Activated CD4-positive, alpha-beta T cell treated with anti-CD3 and anti-CD28 coated beads for 36 hours (primary cell): ENCODE measurements at regions of chr14 and their contacts with region 1.

Region 1: GRCh38 chr14:65704850-65705249 is 292.3 kb downstream of the FUT8 start:
- DNase-seq: peak; percentile 67
- ATAC-seq: peak; percentile 96
- H3K4me3 Mint-ChIP-seq: no peak overlapping the region
- H3K27ac Mint-ChIP-seq: peak overlapping the region; percentile 84
- H3K4me1 Mint-ChIP-seq: peaks cover 20% of the 10 kb centered on the region
- H3K27me3 Mint-ChIP-seq: no peaks in the 10 kb centered on the region

Region 2: GRCh38 chr14:65102441-65103149 is 602.3 kb before region 1 on chr14 and contains the start of gene MAX:
- CTCF ChIA-PET with region 1: no interaction called
- POLR2A ChIA-PET with region 1: no interaction called
- intact Hi-C with region 1: loop called in 1 of 2 experiments (anchors 5 kb)
- DNase-seq: peak; percentile 99
- ATAC-seq: peak; percentile 95
- H3K4me3 Mint-ChIP-seq: peak within 1 kb of the TSS; percentile 89
- H3K27ac Mint-ChIP-seq: peak within 1 kb of the TSS; percentile 96
- H3K4me1 Mint-ChIP-seq: peaks cover 40% of the 10 kb centered on the region
- H3K27me3 Mint-ChIP-seq: peaks cover 2% of the 10 kb centered on the region
- total RNA-seq, gene MAX: 93.6 to 136 TPM

Region 3: GRCh38 chr14:65302571-65303189 is 402.2 kb before region 1 on chr14:
- CTCF ChIA-PET with region 1: no interaction called
- POLR2A ChIA-PET with region 1: no interaction called
- intact Hi-C with region 1: loop called in 1 of 2 experiments (anchors 1 kb)
- DNase-seq: peak; percentile 83
- ATAC-seq: peak; percentile 74
- H3K4me3 Mint-ChIP-seq: peak overlapping the region; percentile 37
- H3K27ac Mint-ChIP-seq: peak overlapping the region; percentile 86
- H3K4me1 Mint-ChIP-seq: peaks cover 63% of the 10 kb centered on the region
- H3K27me3 Mint-ChIP-seq: no peaks in the 10 kb centered on the region

Region 4: DNA sequence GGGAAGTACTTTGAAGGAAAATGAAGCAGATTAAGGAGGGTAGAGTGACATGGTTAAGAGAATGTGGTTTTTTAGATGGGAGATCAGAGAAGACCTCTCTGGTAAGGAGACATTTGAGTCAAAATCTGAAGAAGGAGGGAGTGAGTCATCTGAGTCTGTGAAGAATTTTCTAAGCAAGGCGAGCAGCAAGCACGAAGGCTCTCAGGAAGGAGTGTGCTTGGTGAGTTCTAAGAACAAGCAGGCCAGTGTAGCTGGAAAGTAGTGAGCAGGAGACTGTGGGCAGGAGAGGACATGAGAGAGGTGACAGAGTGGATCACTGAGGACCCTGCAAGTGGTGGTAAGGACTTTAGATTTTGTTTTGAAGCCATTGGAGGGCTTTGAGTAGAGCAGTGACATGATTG is 368.7 kb before region 1 on chr14:
- CTCF ChIA-PET with region 1: no interaction called
- POLR2A ChIA-PET with region 1: no interaction called
- intact Hi-C with region 1: loop called in 1 of 2 experiments (anchors 1 kb)
- DNase-seq: peak; percentile 72
- ATAC-seq: peak; percentile 89
- H3K4me3 Mint-ChIP-seq: peak overlapping the region; percentile 74
- H3K27ac Mint-ChIP-seq: peak overlapping the region; percentile 95
- H3K4me1 Mint-ChIP-seq: peaks cover 55% of the 10 kb centered on the region
- H3K27me3 Mint-ChIP-seq: no peaks in the 10 kb centered on the region

Region 5: DNA sequence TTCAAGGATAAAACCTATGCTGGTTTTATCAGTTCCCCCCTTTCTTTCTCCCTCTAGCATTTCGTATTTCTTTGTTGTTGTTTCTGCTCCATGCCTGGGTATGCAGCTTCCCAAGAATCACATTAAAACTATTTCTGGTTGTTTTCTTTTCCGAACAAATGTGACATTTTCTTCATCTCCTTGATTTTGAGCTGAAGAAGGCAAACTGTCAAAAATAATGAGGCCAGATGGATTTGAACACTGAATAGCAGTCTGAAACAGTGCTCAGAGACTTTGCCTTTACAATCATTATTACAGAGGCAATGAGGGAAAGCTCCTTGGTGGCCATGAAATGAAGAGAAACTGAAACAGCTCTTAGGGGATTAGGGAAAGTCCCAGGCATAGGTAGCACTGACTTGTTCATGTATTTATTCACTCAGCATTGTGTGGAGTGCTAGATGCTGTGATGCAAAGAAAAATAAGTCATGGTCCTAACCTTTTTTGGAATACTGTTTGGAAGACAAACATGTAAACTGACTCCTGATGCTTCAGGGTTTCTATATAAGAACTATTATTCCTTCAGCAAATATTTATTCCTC is 27.2 kb after region 1 on chr14:
- CTCF ChIA-PET with region 1: interaction called, 3 read pairs
- POLR2A ChIA-PET with region 1: no interaction called
- intact Hi-C with region 1: loop called (anchors 1 kb)
- DNase-seq: peak; percentile 11
- ATAC-seq: peak; percentile 100
- H3K4me3 Mint-ChIP-seq: no peak overlapping the region
- H3K27ac Mint-ChIP-seq: peak overlapping the region; percentile 77
- H3K4me1 Mint-ChIP-seq: peaks cover 12% of the 10 kb centered on the region
- H3K27me3 Mint-ChIP-seq: no peaks in the 10 kb centered on the region

Region 6: GRCh38 chr14:65804752-65805473 is 100.1 kb after region 1 on chr14:
- CTCF ChIA-PET with region 1: no interaction called
- POLR2A ChIA-PET with region 1: no interaction called
- intact Hi-C with region 1: loop called in 1 of 2 experiments (anchors 2 kb)
- DNase-seq: peak; percentile 23
- ATAC-seq: peak; percentile 68
- H3K4me3 Mint-ChIP-seq: no peak overlapping the region
- H3K27ac Mint-ChIP-seq: no peak overlapping the region
- H3K4me1 Mint-ChIP-seq: peaks cover 13% of the 10 kb centered on the region
- H3K27me3 Mint-ChIP-seq: no peaks in the 10 kb centered on the region

Region 7: GRCh38 chr14:65991104-65991503 is 286.3 kb after region 1 on chr14:
- CTCF ChIA-PET with region 1: no interaction called
- POLR2A ChIA-PET with region 1: no interaction called
- intact Hi-C with region 1: no loop called
- DNase-seq: no peak
- ATAC-seq: no peak
- H3K4me3 Mint-ChIP-seq: no peak overlapping the region
- H3K27ac Mint-ChIP-seq: no peak overlapping the region
- H3K4me1 Mint-ChIP-seq: peaks cover 35% of the 10 kb centered on the region
- H3K27me3 Mint-ChIP-seq: no peaks in the 10 kb centered on the region